Activated CD8-positive, alpha-beta T cell treated with anti-CD3 and anti-CD28 coated beads for 36 hours (primary cell): ENCODE measurements at regions of chr2 and their contacts with region 1.

Region 1: GRCh38 chr2:216683846-216684507 is 11.4 kb downstream of the IGFBP5 start:
- DNase-seq: no peak
- ATAC-seq: no peak
- H3K4me3 Mint-ChIP-seq: no peak overlapping the region
- H3K27ac Mint-ChIP-seq: no peak overlapping the region
- H3K4me1 Mint-ChIP-seq: peaks cover 7% of the 10 kb centered on the region
- H3K27me3 Mint-ChIP-seq: peaks cover 25% of the 10 kb centered on the region
- CTCF ChIP-seq: no peak

Region 2: DNA sequence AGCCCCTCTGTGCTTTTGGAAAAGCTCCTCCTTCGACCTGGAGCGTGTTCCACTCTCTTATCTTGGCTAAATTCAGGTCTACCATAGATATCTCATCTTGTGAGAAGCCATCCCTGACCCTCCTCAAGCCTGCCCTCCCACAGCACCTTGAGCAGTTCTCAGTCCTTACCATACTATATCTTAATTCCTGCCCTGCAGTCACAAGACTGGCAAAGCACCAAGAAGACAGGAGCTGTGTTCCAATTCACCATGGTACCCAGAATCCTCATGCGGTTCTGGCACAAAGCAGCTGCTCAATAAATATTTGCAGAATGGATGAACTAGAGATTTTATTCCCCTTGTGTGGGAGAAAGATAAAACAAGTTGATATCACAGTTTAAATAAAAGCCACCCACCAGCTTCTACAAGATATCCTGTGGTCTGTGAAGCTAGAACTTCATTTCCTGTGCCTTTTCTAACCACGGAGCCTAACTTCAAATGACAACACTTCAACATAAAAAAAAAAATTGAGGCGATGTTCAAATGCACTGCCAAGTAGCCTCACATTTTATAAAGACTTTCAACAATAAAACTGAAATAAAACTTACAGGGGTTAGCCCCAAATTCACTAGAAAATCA is 331.2 kb before region 1 on chr2:
- CTCF ChIA-PET with region 1: no interaction called
- POLR2A ChIA-PET with region 1: no interaction called
- intact Hi-C with region 1: no loop called
- DNase-seq: peak; percentile 19
- ATAC-seq: peak; percentile 28
- H3K4me3 Mint-ChIP-seq: no peak overlapping the region
- H3K27ac Mint-ChIP-seq: peak overlapping the region; percentile 81
- H3K4me1 Mint-ChIP-seq: peaks cover 63% of the 10 kb centered on the region
- H3K27me3 Mint-ChIP-seq: no peaks in the 10 kb centered on the region
- CTCF ChIP-seq: no peak

Region 3: DNA sequence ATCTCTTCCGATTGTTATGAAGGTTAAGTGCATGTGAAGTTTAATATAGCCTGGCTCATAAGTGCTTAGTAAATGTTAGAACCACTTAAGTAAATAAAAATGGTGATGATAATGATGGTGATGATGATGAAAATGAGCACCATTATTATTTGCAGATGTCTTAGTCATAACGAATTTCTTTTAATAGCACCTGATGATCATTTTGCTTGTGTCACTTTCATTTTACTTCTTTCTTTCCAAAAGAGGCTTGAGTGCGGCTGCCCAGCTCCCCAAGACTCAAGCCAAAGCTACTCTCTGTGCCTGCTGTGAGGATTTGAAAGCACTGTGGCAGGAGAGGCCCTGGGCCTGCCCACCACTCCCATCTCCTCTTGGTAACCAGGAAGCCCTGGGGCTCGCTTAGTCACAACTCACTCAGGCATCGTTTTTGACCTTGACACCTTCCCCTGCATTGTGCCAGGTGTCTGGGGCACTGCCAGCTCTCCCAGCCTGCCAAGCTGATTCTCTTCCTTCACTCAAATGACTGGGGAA is 144.2 kb before region 1 on chr2:
- CTCF ChIA-PET with region 1: no interaction called
- POLR2A ChIA-PET with region 1: no interaction called
- intact Hi-C with region 1: no loop called
- DNase-seq: no peak
- ATAC-seq: no peak
- H3K4me3 Mint-ChIP-seq: no peak overlapping the region
- H3K27ac Mint-ChIP-seq: no peak overlapping the region
- H3K4me1 Mint-ChIP-seq: no peaks in the 10 kb centered on the region
- H3K27me3 Mint-ChIP-seq: no peaks in the 10 kb centered on the region
- CTCF ChIP-seq: no peak

Region 4: GRCh38 chr2:216752855-216753505 is 69.0 kb after region 1 on chr2:
- CTCF ChIA-PET with region 1: no interaction called
- POLR2A ChIA-PET with region 1: no interaction called
- intact Hi-C with region 1: no loop called
- DNase-seq: no peak
- ATAC-seq: no peak
- H3K4me3 Mint-ChIP-seq: no peak overlapping the region
- H3K27ac Mint-ChIP-seq: no peak overlapping the region
- H3K4me1 Mint-ChIP-seq: no peaks in the 10 kb centered on the region
- H3K27me3 Mint-ChIP-seq: peaks cover 3% of the 10 kb centered on the region
- CTCF ChIP-seq: no peak

Region 5: DNA sequence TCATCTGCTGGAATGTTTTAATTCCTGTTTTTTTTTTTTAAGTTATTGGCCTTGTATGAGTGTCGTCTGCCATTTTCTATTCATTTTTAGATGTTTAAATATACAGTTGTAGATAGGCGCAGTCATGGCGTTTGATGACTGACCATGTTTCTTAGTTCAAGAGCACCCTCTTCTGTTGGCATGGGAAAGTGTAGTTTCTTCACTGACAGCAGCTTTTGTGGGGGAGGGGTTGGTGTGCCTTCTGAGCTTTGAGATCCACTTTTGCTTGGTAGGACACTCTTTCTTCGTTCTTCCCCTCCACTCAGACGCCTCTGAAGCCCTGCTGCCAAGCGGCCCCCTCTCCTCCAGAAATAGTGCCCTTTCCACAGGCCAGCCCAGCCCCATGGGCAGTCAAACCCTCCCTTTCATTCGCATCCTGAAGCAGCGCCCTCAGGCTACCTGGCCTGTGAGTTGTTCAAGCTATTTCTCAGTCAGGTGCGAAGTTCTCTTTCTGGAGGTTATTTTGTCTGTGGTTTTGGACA is 826.9 kb after region 1 on chr2:
- CTCF ChIA-PET with region 1: interaction called, 4 read pairs
- POLR2A ChIA-PET with region 1: no interaction called
- intact Hi-C with region 1: loop called (anchors 5 kb)
- DNase-seq: peak; percentile 69
- ATAC-seq: peak; percentile 89
- H3K4me3 Mint-ChIP-seq: no peak overlapping the region
- H3K27ac Mint-ChIP-seq: no peak overlapping the region
- H3K4me1 Mint-ChIP-seq: peaks cover 8% of the 10 kb centered on the region
- H3K27me3 Mint-ChIP-seq: peaks cover 1% of the 10 kb centered on the region
- CTCF ChIP-seq: peak; percentile 70